Right ventricle myocardium inferior (tissue), 1 donor: ENCODE measurements at regions of chr5 and their contacts with region 1.

Region 1: DNA sequence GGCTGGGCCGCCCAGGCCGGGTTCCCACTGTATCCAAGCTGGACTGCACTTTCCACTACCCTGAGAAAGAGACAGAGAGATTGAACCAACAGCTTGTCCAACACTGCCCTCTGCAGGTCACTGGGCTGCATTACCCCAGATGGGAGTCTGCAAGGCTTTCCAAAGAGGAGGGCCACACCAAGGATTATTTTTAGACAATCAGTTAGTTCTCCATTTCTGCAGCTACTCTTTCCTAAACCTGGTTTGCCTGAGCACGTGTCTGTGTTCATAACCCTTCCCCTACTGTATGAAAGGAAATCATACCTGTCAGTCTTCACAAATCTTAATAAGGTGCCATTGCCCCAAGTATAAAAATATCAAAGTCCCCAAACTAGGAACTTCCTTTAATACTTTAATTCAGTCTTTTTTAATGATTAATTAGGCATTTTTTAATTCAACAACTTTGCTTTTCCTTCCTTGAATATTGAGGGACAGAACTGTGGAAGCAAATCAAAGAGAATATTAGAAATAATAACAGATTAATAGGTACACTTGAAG is 13.4 kb upstream of the FGF1 start:
- DNase-seq: peak; percentile 89
- ATAC-seq: peak; percentile 90

Region 2: DNA sequence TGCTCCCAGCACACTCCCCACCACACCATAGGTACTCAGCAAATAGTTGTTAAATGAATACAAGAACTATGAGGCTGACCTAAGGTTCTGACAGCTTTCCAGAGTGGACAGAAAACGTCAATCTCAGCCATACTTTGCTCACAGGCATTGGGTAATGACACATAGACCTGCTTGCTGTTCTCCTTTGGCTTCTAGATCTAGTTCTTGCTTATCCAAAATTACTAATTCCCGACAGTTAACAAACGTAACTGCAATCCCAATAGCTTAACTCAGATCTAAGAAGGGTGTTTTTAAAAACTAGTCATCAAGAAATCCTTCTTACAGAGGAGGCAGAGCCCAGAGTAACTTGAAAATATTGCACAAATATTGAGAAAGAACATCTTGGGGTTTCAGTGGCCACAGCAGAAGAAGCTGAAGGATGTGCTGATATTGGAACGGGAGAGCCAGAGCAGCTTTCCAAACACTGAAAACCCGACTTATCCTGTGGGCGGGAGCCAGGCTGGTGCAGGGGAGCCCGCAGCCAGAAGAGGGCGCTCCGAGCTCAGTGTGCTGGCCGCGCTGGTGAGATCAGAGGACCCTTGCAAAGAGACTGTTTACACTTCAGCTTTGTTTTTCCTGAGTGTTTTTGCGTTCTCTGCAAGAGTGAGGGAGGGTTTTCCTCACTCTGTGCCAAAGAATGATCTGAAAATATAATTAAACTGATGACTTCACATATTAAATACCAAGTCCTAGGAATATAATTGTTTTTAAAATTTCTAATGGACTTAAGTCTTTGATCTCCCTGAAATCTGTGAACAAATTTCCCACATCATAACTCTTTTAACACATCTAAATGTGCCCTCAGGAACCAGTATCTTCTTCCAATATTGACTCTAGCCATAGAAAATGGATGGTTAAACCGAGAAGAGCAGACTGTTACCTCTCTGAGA is 43.6 kb before region 1 on chr5:
- intact Hi-C with region 1: loop called (anchors 1 kb)
- DNase-seq: peak; percentile 93
- ATAC-seq: peak; percentile 97

Region 3: DNA sequence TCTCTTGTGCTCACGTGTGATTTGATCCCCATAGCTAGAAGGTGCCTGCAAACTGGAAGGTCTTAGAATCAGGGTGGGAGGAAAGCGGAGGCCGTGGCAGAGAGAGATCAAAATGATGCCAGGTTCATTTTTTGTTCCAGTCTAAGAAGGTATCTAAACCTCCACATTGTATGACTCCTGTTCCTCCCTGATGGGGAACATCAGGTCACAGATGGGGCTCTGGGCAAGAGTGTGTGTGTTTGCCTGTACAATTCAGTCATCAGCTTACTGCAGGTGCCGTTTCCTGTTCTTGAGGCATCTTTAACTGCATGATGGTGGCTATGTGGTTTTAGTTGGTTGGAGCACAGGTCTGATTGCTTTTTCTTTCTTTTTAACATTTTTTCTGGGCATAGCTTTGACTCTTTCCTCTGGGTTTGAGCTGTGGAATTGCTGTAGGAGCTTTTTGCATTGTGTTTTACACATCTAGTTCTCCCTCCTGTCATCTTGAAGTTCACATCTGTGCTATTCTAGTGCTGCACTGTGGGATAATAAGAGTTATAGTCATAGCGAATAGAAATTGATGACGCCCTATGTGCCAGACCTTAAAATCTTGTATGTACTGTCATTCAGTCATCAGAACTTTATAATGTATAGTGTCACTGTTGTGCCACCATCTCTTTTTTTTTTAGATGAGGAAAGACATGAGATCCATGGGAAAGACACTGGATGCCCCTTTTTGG is 101.7 kb after region 1 on chr5:
- intact Hi-C with region 1: no loop called
- DNase-seq: no peak
- ATAC-seq: no peak